HepG2 (cell line): ENCODE measurements at regions of chr7 and their contacts with region 1.

Region 1: GRCh38 chr7:92134271-92135051 is at the start of gene CYP51A1:
- DNase-seq: peak; percentile 84
- ATAC-seq: peak; percentile 91
- H3K4me3 ChIP-seq: peak within 1 kb of the TSS; percentile 95 to 100 (median 98)
- H3K27ac ChIP-seq: peak within 1 kb of the TSS; percentile 98
- H3K4me1 ChIP-seq: peaks cover 47% of the 10 kb centered on the region
- H3K27me3 ChIP-seq: no peaks in the 10 kb centered on the region; a peak in 1 of 5 replicates
- CTCF ChIP-seq: peak; percentile 28; the same call in 1 of the 2 replicates
- EP300 ChIP-seq: no peak; a peak in 1 of 4 replicates
- POLR2A ChIP-seq: peak; percentile 84 to 93
- RAD21 ChIP-seq: peak; percentile 45; the same call in 1 of the 2 replicates
- total RNA-seq, gene CYP51A1: 194 and 260 TPM in 2 replicates

Region 2: GRCh38 chr7:91800389-91800788 is 334.1 kb before region 1 on chr7:
- CTCF ChIA-PET with region 1: no interaction called
- POLR2A ChIA-PET with region 1: no interaction called
- in situ Hi-C with region 1: no loop called
- intact Hi-C with region 1: no loop called
- DNase-seq: no peak
- ATAC-seq: peak; percentile 38; the same call in 2 of the 3 replicates
- H3K4me3 ChIP-seq: no peak overlapping the region
- H3K27ac ChIP-seq: no peak overlapping the region
- H3K4me1 ChIP-seq: peaks cover 10% of the 10 kb centered on the region; the same call in 1 of the 2 replicates
- H3K27me3 ChIP-seq: no peaks in the 10 kb centered on the region
- CTCF ChIP-seq: no peak
- EP300 ChIP-seq: no peak
- POLR2A ChIP-seq: no peak
- RAD21 ChIP-seq: no peak

Region 3: DNA sequence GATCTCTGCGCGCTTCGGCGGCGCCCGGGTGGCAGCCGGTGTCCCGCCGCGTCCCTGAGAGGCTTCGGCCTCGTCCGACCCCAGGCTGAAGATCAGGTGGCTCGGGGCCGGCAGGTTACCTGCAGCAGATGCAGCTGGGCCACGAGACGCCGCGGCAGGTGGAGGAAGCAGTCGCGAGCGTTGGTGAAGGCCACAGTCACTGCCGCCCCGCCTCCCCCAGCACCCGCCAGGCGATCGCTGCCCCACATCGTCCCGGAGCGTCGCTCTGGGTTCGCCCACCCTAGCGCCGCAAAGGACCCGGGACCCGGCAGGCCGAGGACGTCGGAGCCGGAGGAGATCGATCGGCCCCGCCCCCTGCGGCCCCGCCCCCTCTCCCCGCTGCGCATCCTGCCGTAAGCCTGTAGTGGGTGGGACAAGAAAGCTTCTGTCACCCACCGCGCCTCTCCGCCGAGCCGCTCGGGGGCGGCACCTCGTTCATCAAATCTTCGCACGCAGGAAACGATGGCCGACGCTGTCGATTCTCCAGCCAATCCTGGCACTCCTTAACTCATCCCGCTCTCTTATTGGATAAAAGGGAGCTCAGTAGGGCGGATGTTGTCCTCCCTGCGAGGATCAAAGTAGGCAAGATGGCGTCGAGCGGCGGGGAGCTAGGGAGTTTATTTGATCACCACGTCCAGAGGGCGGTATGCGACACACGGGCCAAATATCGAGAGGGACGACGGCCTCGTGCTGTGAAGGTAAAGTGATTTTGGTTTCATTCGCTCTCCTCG is 393.9 kb after region 1 on chr7 and contains the starts of genes PEX1 and RBM48:
- CTCF ChIA-PET with region 1: no interaction called
- POLR2A ChIA-PET with region 1: interaction called, 5 read pairs
- in situ Hi-C with region 1: no loop called
- intact Hi-C with region 1: loop called (anchors 1 kb)
- DNase-seq: peak; percentile 99
- ATAC-seq: peak; percentile 95
- H3K4me3 ChIP-seq: peak within 1 kb of the TSS; percentile 88 to 98 (median 92)
- H3K27ac ChIP-seq: peak within 1 kb of the TSS; percentile 90
- H3K4me1 ChIP-seq: peaks cover 34% of the 10 kb centered on the region
- H3K27me3 ChIP-seq: no peaks in the 10 kb centered on the region; a peak in 1 of 5 replicates
- CTCF ChIP-seq: peak; percentile 92
- EP300 ChIP-seq: no peak
- POLR2A ChIP-seq: peak; percentile 59 to 92
- RAD21 ChIP-seq: no peak
- total RNA-seq, gene PEX1: 19.4 and 22.4 TPM in 2 replicates
- total RNA-seq, gene RBM48: 10.1 and 12.2 TPM in 2 replicates